Upper lobe of right lung (tissue), 1 donor: ENCODE measurements at regions of chr22 and their contacts with region 1.

Region 1: GRCh38 chr22:44625981-44626687 is 75.9 kb upstream of the PRR5 start:
- DNase-seq: peak; percentile 80
- ATAC-seq: peak; percentile 90
- H3K4me3 ChIP-seq: no peak overlapping the region
- H3K27ac ChIP-seq: no peak overlapping the region
- H3K4me1 ChIP-seq: no peaks in the 10 kb centered on the region
- H3K27me3 ChIP-seq: no peaks in the 10 kb centered on the region
- CTCF ChIP-seq: peak; percentile 95

Region 2: DNA sequence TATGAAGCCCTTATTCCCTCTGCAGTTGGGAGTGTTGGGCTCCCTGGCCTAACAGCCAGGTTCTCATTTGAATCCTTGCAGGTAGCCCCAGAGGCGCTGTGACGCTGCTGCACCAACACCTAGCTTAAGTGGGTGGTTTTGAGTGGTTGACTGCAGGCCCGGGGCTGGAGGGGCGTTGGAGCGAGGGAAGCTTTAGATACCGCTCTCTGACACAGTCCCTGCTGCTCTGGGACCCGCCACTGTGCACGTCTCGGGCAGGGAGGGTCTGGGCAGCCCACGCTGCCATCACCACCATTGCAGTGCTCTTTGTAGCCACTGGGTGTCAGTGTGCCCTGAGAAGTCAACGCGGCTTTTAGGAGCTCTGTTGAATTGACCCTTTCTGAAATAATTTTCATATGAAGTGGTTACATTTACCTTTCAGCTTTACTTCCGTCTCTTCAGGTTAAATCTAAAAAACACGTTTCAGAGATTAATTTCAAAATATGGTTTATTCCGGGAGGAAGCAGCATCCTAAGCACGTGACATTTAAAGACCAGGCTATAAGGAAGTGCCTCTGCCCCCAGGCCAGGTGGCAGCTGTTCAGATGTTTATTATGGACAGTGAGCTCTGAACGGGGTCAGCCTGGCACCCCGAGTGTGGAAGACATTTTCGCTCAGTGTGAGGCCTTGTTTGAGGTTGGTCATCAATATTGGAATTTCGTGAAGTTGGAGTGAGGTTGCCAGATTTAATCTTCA is 632.9 kb before region 1 on chr22:
- intact Hi-C with region 1: loop called (anchors 5 kb)
- DNase-seq: peak; percentile 66
- ATAC-seq: peak; percentile 83
- H3K4me3 ChIP-seq: no peak overlapping the region
- H3K27ac ChIP-seq: no peak overlapping the region
- H3K4me1 ChIP-seq: no peaks in the 10 kb centered on the region
- H3K27me3 ChIP-seq: no peaks in the 10 kb centered on the region
- CTCF ChIP-seq: peak; percentile 97

Region 3: DNA sequence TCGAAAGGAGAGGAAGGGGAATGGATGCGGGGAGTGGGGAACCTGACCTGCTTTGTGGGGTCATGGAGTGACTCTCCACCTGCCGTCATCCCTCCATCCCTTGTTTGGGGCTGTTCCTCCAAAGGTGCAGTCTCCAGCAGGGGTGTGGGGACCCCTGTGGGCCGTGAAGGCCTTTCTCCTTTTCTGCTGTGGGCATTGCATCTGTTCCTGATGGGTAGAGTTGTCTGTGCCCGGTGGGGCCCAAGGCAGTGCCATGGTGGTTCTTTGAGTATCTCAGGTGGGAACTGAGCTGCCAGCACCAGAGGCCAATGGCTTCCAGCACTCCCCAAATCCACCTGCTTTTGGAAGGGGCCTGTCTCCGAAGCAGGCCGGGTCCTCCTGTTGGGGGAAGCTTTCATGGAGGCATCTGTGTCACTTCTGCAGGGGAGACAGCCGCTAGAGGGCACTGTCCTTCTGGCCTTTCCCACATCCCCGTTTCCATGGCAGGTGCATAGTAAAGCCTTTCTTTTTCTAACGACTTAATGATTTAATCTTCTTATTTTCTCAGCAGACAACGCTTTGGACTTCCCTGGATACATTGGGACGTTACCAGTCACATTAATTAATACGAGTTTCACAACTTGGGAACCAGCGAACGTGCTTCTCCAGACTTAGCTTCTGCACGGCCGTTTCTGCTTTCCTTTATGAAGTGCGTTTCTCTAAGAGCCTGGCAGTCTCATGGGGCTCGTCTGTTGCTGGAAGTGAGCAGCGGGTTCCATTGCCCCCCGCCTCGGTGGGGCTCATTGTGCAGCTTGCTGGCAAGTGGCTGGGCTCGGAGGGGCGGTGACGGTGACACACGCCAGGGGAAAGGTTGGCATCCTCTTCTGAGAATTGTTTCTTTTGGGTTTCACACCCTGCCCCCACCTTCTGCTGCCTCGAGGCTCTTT is 544.9 kb before region 1 on chr22:
- intact Hi-C with region 1: loop called (anchors 5 kb)
- DNase-seq: peak; percentile 80
- ATAC-seq: peak; percentile 75
- H3K4me3 ChIP-seq: no peak overlapping the region
- H3K27ac ChIP-seq: no peak overlapping the region
- H3K4me1 ChIP-seq: peaks cover 8% of the 10 kb centered on the region
- H3K27me3 ChIP-seq: no peaks in the 10 kb centered on the region
- CTCF ChIP-seq: peak; percentile 88

Region 4: DNA sequence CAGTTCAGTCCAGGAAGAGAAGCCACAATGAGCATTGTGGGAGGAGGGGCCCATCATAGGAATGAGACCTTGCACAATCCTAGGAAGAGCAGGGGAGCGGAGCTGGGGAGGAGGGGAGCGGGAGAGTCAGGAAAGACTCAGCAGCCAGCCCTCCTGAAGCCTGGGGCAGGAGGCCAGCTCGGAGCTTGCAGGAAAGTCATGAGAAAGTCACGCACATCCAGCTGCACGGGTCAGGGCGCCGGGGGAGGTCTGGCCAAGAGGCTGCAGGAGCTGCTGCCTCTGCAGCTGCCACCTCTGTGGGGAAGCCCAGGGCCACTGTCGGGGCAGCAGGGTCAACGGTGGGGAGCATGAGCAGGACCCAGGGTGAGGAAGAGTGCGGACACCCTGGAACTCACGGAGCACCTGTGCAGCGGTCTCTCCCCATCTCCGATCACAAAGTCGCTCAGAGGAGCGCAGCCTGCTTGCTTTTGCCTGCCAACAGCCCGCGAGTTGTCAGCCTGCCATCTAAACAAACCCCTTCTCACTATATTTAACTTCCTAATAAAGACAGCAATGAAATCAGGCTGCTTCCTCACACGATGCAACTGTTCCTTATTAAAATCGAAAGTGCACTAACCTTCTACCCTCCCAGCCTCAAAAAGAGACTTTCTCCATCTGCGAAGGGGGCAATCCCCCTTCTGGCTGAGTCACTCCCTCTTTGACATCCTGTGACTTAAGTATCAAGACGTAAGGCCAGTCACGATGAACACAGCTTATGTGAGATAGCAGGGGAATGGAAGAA is 75.2 kb before region 1 on chr22:
- intact Hi-C with region 1: no loop called
- DNase-seq: peak; percentile 74
- ATAC-seq: peak; percentile 80
- H3K4me3 ChIP-seq: peak overlapping the region; percentile 29
- H3K27ac ChIP-seq: peak overlapping the region; percentile 60
- H3K4me1 ChIP-seq: no peaks in the 10 kb centered on the region
- H3K27me3 ChIP-seq: peaks cover 5% of the 10 kb centered on the region
- CTCF ChIP-seq: no peak